ENCODE measurements at regions of chr12 and their contacts with region 1.

Region 1: GRCh38 chr12:85476756-85477155 is 196.7 kb downstream of the ALX1 start:
- DNase-seq: no peak
- ATAC-seq: no peak
- H3K4me3 ChIP-seq: no peak overlapping the region
- H3K27ac ChIP-seq: no peak overlapping the region
- H3K4me1 ChIP-seq: no peaks in the 10 kb centered on the region
- H3K27me3 ChIP-seq: no peaks in the 10 kb centered on the region
- CTCF ChIP-seq: no peak
- POLR2A ChIP-seq: no peak

Region 2: DNA sequence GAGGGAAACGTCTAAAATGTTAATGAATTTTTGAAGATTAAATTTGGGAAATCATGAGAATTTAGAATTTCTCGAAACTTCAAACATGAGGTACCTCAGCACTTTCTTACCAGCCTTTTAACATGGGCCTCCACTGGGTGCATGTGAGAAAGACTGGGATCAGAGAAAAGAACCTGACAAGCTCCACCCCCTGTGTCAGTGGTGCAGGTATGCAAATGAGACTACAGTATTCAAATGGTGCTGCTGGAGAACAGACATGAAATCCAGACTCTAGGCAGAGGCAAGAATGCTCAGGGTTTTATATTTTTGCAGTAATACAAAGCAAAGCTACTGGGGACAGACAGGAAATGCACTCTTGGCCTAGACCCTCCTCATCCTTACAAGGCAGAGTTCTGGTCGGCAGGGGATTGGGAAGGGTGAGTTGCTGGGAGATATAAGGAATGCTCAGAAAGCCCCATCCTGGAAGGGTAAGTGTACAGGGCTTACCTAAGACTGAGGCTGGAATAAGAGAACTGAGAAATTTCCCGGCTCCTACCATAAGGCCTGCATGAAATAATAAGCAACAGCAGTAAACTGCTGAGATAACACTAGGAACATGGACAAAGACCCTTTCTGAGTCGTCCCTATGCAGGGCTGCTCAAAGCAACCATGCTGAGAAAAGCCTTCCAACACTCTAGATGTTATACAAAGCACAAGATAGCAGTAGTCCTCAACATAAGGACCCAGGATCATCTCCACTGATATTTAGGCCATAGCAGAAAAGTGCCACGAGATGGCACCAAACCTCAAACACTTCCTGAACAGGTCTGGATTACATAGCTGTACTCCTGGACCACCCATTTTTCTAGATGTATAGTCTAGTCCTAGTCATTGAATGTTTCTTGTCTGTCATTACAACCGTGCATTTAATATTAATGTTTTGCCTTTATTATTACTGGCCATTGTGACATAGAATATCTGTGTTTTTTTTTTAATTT is 98.7 kb after region 1 on chr12:
- intact Hi-C with region 1: loop called in 3 of 10 experiments (anchors 5 to 10 kb)
- DNase-seq: peak; percentile 19 to 40 (median 29)
- ATAC-seq: peak in 3 of 4 donors; percentile 79 to 83 (median 81)
- H3K4me3 ChIP-seq: no peak overlapping the region
- H3K27ac ChIP-seq: no peak overlapping the region
- H3K4me1 ChIP-seq: no peaks in the 10 kb centered on the region
- H3K27me3 ChIP-seq: no peaks in the 10 kb centered on the region
- CTCF ChIP-seq: peak; percentile 46 to 81 (median 70)
- POLR2A ChIP-seq: no peak

Region 3: GRCh38 chr12:85872497-85873091 is 395.8 kb after region 1 on chr12:
- intact Hi-C with region 1: loop called in 6 of 10 experiments (anchors 5 kb)
- DNase-seq: no peak
- ATAC-seq: no peak
- H3K4me3 ChIP-seq: no peak overlapping the region
- H3K27ac ChIP-seq: no peak overlapping the region
- H3K4me1 ChIP-seq: no peaks in the 10 kb centered on the region
- H3K27me3 ChIP-seq: peaks cover 0 to 6% (median 0%) of the 10 kb centered on the region in 9 donors
- CTCF ChIP-seq: peak; percentile 62 to 90 (median 74)
- POLR2A ChIP-seq: no peak

Measured in heart left ventricle (tissue), 16 donors.